Cardiac septum (tissue), 1 donor: ENCODE measurements at regions of chr20 and their contacts with region 1.

Region 1: DNA sequence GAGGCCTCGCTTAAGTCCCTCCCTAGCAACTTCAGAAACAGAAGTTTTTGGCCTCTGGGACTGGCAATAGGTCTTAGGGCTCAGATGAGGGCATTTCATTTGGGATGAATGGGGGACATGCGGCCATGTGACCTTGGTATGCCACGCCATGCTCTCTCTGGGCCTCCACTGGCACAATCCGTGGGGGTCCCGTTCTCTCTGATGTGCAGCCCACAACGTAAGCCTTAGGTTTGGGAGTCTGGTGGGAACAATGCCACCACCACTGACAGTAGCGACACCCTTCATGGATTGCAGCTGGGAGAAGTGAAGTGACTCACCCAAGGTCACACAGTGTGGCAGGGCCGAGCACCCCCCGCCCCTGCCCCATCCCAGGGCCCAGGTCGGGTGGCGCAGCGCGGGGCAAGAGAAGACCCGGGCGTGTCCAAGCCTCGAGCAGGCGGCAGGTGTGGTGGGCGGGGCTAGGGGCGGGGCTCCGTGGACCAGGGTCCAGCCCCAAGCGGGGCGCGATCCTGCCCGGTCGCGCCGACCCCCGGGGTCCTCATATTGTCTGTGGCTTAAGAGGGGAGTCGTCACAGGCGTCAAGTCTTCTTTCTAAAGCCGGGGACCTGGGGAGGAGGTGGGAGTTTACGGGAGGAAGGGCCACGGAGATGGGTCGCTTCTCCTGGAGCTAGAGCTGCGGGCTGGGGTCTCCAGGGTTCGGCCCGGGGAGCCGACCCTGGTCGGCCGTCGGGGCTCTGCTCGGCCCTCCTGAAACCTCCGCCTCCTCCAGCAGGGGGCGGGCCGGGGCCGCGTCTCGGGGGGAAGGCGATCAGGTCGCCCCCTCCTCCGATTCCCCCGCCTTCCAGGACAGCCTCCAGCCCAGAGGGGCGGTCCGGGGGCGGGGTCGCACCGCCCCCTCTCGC is 698 bp upstream of the CEBPB start:
- DNase-seq: peak; percentile 95

Region 2: DNA sequence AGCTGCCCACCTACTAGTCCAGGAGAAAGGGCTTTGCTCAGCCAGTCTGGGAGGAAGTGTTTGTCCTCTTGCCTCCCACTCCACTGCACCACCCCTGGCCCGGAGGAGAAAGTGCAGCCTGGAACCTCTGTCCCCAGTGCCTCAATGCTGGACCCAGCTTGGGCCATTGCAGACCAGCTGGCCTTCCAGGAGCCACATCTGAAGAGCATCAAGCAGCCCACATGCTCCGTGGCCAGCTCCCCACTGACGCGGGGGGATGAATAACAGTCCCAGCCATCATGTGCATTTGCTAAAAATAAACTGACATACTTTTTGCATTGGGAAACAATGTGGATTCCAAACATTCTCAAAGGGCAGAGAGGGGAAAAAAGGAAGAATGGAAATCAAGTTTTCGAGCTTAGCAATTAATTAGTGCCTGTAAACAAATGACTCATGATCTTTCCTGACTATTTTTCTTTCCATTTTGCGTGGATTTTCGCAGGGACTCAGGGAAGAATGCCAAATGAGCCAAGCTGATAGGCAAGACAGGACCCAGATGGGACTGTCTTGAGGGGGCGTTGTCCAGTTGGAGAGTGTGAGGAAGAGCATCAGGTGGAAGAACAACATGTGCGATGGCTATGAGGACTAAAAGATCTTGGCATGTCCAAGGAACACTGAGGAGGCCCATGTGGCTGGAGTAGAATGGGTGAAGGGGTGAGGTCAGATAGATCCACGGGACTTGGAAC is 34.8 kb after region 1 on chr20:
- intact Hi-C with region 1: loop called (anchors 2 kb)
- DNase-seq: peak; percentile 82

Region 3: GRCh38 chr20:50308513-50309279 is 118.8 kb after region 1 on chr20:
- intact Hi-C with region 1: loop called (anchors 5 kb)
- DNase-seq: peak; percentile 97

Region 4: GRCh38 chr20:50399917-50400704 is 210.2 kb after region 1 on chr20:
- intact Hi-C with region 1: loop called (anchors 2 kb)
- DNase-seq: no peak

Region 5: DNA sequence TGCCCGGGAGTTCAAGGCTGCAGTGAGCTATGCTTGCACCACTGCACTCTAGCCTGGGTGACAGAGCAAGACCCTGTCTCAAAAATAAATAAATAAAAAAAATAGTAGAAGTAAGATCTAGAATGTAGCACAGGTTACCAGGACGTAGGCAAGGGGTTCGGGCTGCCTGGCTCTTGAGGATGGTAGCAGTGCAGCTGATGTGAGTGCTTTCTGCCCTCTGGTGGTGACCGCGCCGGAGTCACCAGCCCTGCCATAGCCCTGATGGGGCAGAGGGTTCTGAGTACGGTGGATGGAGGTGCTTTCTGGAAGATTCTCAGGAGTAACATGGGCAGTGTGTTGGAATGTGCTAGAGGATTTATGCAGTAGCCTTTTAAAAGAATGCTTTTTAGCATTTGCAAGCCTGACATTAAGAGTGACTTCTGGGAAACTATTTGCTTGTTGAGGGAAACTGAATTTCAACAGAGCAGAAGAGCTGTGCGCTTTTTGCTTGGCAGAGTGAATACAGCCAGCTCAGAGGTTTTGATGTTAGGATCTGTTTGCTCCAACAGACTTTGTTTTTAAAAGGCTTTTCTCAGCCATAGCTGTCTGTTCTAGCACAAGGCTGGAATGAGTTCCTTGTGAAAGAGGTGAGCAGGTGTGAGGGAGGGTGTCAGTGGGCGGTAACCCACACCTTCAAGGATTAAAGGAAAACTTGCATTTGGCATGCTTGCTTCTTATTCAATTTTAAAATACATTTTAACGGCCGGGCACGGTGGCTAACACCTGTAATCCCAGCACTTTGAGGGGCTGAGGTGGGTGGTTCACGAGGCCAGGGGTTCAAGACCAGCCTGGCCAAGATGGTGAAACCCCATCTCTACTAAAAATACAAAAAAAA is 386.2 kb after region 1 on chr20:
- intact Hi-C with region 1: loop called (anchors 2 kb)
- DNase-seq: no peak